AG04449 (cell line): ENCODE measurements at regions of chr13 and their contacts with region 1.

Region 1: GRCh38 chr13:45310341-45311125 is 30.4 kb downstream of the TPT1 start:
- DNase-seq: no peak
- H3K4me3 ChIP-seq: peak overlapping the region; percentile 23; the same call in 1 of the 2 replicates
- CTCF ChIP-seq: no peak

Region 2: GRCh38 chr13:44692173-44692713 is 618.3 kb before region 1 on chr13:
- CTCF ChIA-PET with region 1: no interaction called
- POLR2A ChIA-PET with region 1: no interaction called
- DNase-seq: no peak
- H3K4me3 ChIP-seq: no peak overlapping the region
- CTCF ChIP-seq: no peak

Region 3: GRCh38 chr13:44969551-44970484 is 340.7 kb before region 1 on chr13:
- CTCF ChIA-PET with region 1: interaction called, 19 read pairs
- POLR2A ChIA-PET with region 1: no interaction called
- DNase-seq: no peak
- H3K4me3 ChIP-seq: no peak overlapping the region
- CTCF ChIP-seq: peak; percentile 41

Region 4: DNA sequence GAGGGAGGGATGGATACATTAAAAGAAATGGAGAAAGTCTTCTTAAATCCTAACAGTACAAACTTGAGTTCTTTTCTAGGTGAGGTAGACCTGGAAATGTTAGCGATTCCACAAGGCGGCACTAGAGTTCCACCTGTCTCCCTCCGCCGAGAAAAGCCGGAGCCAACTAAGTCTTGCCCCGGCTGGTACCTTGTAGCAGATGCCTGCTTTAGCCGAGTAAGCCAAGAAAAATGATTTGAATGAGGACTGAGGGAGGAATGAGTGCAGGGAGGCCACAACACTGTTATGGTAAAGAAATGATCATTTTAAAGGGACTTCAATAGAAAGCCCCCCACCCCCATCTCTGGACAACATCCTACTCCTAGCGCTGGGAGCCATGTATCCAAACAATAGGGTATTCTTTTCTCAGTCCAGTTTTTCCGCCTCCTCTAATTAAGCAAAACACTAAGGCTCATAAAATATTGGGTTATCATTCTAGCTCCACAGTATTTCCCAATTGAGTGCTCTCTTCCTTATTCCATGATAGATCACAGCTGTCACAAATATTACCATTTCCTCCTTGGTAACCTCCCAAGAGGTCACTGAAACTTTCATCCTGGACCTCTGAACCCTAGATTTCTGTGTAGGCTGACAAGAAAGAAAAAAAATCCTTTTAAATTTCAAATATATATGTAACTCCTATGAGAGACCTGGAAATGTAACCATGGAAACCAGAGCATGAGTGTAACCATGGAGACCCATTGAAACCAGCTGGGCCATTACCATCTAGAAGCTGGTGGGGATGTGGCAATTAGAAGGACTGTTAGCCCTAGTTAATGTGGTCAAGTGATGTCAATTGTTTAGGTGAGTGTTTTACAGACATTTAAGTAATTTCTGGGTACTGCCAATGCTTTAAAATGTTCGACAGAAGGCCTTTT is 262.9 kb before region 1 on chr13:
- CTCF ChIA-PET with region 1: interaction called, 179 read pairs
- POLR2A ChIA-PET with region 1: no interaction called
- DNase-seq: peak; percentile 60
- H3K4me3 ChIP-seq: peak overlapping the region; percentile 59
- CTCF ChIP-seq: peak; percentile 74

Region 5: DNA sequence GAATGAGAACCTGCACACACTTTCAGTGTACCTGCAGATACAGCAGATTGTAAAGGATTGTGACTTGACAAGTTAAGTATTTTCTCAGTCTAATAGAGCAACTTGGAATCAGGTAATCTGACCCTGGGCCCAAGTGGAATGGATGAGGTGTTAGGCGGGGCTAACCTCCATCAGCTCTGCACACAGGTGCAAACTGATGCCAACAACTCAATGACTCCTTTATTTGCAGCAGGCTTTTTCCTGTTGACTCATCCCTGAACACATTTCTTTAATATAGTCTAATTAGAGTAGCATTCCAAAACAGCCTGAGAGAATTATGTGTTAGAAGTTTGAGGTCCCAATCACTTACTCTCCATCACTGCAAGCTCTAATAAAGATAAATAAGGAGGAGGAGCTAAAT is 18.4 kb before region 1 on chr13:
- CTCF ChIA-PET with region 1: interaction called, 48 read pairs
- POLR2A ChIA-PET with region 1: no interaction called
- DNase-seq: no peak
- H3K4me3 ChIP-seq: no peak overlapping the region
- CTCF ChIP-seq: no peak

Region 6: GRCh38 chr13:45325806-45326205 is 15.3 kb after region 1 on chr13:
- CTCF ChIA-PET with region 1: interaction called, 36 read pairs
- POLR2A ChIA-PET with region 1: no interaction called
- DNase-seq: no peak
- H3K4me3 ChIP-seq: no peak overlapping the region
- CTCF ChIP-seq: no peak